Heart left ventricle (tissue), 16 donors: ENCODE measurements at regions of chr1 and their contacts with region 1.

Region 1: DNA sequence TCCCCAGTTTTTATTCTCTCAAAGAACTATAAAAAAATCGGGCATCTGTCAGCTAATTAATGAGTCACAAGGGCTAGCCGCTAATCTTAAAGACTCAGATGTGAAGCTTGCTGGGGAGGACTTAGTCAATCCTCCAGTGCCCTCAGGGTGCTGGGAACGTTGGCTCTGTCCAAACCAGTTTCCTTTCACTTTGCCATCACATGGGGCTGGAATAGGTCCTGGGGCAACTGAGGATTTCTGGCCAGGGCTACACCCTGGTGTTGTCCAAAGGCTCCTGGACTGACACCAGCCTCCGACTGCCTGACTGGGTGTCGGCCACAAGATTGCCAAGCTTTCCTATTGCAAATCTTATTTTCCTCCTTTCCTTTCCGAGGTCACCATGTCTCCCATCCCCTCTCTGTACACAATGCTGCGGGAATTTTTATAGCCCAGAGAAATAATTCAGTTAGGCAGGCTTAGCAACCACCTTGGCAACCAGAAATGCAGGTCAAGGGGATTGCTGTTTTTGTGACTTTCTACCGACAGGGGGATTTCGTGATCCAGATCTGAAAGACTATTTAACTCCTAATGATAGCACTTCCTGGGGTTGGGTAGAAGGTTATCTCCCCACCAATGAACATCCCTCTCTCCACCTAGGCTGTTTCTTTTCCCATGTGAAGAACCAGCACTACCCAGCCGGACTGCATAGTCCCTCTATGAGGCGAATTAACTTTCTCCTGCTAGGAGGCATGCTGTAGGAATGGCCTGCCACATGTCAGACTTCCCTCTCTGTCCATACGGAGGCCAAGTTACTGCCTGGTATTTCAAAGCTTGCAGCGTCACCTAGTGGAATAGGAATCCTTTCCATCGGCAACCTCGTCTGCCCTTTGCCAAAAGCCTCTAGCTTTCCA is 29.9 kb upstream of the CTBS start:
- DNase-seq: peak in 3 of 5 donors; percentile 52 to 68 (median 57)
- ATAC-seq: peak; percentile 83 to 91 (median 90)
- H3K4me3 ChIP-seq: peak overlapping the region in 10 of 12 donors; percentile 18 to 57 (median 37)
- H3K27ac ChIP-seq: peak overlapping the region; percentile 4 to 78 (median 58)
- H3K4me1 ChIP-seq: peaks cover 0 to 28% (median 16%) of the 10 kb centered on the region in 12 donors
- H3K27me3 ChIP-seq: no peaks in the 10 kb centered on the region
- CTCF ChIP-seq: peak; percentile 38 to 87 (median 72)
- POLR2A ChIP-seq: no peak

Region 2: GRCh38 chr1:83931658-83932253 is 672.4 kb before region 1 on chr1:
- intact Hi-C with region 1: loop called in 4 of 10 experiments (anchors 10 kb)
- DNase-seq: peak in 1 of 5 donors; percentile 10
- ATAC-seq: peak; percentile 58 to 80 (median 66)
- H3K4me3 ChIP-seq: no peak overlapping the region
- H3K27ac ChIP-seq: no peak overlapping the region
- H3K4me1 ChIP-seq: peaks cover 0 to 5% (median 0%) of the 10 kb centered on the region in 12 donors
- H3K27me3 ChIP-seq: no peaks in the 10 kb centered on the region
- CTCF ChIP-seq: peak; percentile 56 to 76 (median 68)
- POLR2A ChIP-seq: no peak

Region 3: GRCh38 chr1:84133479-84133878 is 470.7 kb before region 1 on chr1:
- intact Hi-C with region 1: loop called in 2 of 10 experiments (anchors 10 kb)
- DNase-seq: peak in 1 of 5 donors; percentile 12
- ATAC-seq: no peak
- H3K4me3 ChIP-seq: no peak overlapping the region
- H3K27ac ChIP-seq: no peak overlapping the region
- H3K4me1 ChIP-seq: no peaks in the 10 kb centered on the region
- H3K27me3 ChIP-seq: no peaks in the 10 kb centered on the region
- CTCF ChIP-seq: no peak
- POLR2A ChIP-seq: no peak

Region 4: GRCh38 chr1:84298328-84298683 is 305.9 kb before region 1 on chr1:
- intact Hi-C with region 1: loop called in 1 of 10 experiments (anchors 10 kb)
- DNase-seq: peak; percentile 61 to 83 (median 66)
- ATAC-seq: peak; percentile 72 to 91 (median 82)
- H3K4me3 ChIP-seq: peak overlapping the region; percentile 69 to 93 (median 82)
- H3K27ac ChIP-seq: peak overlapping the region; percentile 78 to 92 (median 86)
- H3K4me1 ChIP-seq: peaks cover 0 to 42% (median 27%) of the 10 kb centered on the region in 12 donors
- H3K27me3 ChIP-seq: no peaks in the 10 kb centered on the region
- CTCF ChIP-seq: no peak
- POLR2A ChIP-seq: peak in 1 of 2 donors; percentile 59

Region 5: GRCh38 chr1:84442256-84442655 is 161.9 kb before region 1 on chr1:
- intact Hi-C with region 1: loop called in 8 of 10 experiments (anchors 1 to 10 kb)
- DNase-seq: no peak
- ATAC-seq: peak; percentile 51 to 78 (median 74)
- H3K4me3 ChIP-seq: no peak overlapping the region
- H3K27ac ChIP-seq: peak overlapping the region in 1 of 12 donors; percentile 44
- H3K4me1 ChIP-seq: peaks cover 0 to 22% (median 0%) of the 10 kb centered on the region in 12 donors
- H3K27me3 ChIP-seq: peaks cover 0 to 12% (median 0%) of the 10 kb centered on the region in 9 donors
- CTCF ChIP-seq: peak; percentile 7 to 61 (median 46)
- POLR2A ChIP-seq: no peak